HEK293T (cell line): ENCODE measurements at regions of chr12 and their contacts with region 1.

Region 1: DNA sequence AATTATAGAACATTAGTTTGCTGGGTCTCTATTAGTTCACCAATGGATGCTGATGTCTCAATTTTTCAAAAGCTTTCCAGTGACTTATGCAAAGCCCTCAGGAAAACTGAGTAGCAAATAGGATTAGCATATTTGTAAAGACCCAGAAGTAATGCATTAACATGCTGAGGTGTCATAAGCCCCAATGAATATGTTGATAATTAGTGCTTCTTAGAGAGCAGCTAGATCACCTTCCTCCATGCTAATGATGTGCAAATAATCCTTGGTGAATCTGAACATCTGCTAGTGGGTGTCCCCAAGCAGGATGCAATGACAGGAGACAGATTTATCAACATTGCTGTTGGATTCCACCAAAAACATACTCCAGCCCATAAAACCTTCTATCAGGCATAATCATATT is 19.0 kb downstream of the IFNG start:
- DNase-seq: no peak

Region 2: GRCh38 chr12:68223083-68223747 is 82.7 kb after region 1 on chr12:
- CTCF ChIA-PET with region 1: no interaction called
- POLR2A ChIA-PET with region 1: no interaction called
- DNase-seq: peak; percentile 84

Region 3: DNA sequence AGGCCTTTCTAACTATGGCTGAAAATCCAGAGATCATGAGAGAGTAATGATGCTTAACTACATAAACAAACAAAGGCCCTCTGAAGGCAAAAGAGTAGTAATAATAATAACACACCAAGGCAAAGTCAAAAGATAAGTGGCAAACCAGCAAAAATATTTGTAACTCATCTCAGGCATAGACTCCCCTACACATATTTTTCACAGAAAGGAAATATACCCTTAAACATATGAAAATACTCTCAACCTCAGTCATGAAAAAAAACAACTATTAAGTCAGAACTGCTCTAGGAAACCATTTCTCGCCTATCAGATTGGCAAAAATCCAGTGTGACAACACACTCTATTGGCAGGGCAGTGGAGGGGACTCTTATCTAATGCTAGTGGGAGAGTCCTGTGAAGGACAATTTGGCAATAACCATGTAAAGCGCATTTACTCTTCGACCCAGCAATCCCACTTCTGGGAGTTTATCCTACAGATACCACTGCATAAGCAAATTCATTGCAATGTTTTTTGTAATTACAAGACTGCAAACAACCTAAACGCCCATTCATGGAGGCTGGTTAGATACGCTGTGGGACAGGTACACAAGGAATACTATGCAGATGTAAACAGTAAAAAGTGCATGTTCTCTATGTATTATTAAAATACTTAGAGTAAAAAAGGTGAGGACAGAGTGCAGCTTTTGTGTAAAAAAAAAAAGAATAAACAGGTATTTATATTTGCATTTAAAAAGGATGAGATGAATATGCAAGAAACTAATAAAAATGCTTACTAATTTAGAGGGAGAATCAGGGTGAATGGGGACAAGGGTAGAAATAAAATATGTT is 138.9 kb after region 1 on chr12:
- CTCF ChIA-PET with region 1: no interaction called
- POLR2A ChIA-PET with region 1: no interaction called
- DNase-seq: no peak

Region 4: DNA sequence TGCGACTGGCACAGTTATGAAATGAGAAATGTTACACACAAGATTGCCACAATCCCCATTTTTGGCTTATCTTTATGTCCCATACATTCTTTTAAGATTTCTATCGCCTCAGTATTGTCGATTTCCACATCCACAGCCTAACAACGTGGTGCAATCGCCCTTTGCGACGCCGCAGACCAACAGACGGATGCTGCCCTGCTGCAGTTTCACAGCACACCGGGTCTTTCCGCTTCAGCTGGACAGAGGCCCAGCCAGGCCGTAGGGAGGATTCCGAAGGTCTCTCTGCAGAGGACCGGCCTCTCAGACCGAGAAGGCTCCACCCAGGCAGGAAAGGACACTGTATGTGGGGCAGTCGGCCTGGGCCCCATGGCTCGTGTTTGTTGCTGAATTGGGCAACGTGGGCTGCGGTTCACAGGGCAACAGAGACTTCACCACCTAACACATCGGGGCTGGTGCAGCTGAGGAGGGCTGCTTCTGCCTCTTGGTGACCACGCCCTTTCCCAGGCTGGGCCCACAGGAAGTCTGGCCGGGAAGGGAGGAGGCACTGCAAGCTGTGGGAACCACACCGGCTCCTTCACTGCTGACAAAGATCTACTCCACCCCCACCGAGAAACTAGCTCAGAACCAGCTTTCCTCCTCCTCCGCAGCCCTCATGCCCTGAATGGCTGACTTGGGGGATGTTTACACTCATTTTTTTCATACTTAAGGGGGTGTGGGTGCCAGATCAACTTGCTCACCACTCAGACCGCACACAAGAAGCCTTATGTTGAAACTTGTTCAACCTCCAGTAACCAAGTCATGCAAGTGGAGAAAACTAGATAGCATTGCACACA is 224.6 kb after region 1 on chr12:
- CTCF ChIA-PET with region 1: interaction called, 11 read pairs
- POLR2A ChIA-PET with region 1: no interaction called
- DNase-seq: peak; percentile 76